ENCODE measurements at regions of chr7 and their contacts with region 1.

Region 1: DNA sequence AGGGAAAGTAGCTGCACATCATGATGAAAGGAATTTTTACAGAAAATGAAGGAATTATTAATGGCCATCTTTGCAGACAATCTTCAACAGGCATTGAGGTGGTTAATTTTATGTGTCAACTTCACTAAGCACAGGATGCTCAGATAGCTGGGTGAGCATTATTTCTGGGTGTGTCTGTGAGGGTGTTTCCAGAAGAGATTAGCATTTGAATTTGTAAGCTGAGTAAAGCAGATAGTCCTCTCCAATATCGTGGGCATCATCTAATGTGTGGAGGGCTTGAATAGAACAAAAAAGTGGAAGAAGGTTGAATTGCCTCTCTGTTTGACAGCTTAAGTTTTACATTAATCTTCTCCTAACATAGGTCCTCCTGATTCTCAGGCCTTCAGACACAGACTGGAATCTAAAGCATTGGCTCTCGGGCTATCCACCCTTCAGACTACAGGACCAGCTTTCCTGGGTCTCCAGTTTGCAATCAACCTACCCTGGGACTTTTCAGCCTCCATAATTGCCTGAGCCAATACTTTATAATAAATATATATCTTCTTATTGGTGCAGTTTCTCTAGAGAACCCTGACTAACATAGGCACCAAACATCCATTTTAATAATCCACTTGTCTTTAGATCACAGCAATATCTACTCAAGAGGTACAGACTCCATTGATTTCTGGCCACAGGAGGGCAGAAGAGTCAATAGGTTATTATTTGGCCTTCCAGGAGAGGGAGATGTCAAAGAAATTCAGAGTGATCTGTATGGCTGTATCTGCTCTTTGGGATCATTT is 10.5 kb upstream of the CRPPA start:
- DNase-seq: peak; percentile 50 to 65
- ATAC-seq: peak; percentile 99
- H3K4me3 ChIP-seq: no peak overlapping the region
- H3K27ac ChIP-seq: no peak overlapping the region
- H3K4me1 ChIP-seq: no peaks in the 10 kb centered on the region
- CTCF ChIP-seq: peak; percentile 72
- EP300 ChIP-seq: no peak
- POLR2A ChIP-seq: no peak
- RAD21 ChIP-seq: peak; percentile 74 to 77

Region 2: DNA sequence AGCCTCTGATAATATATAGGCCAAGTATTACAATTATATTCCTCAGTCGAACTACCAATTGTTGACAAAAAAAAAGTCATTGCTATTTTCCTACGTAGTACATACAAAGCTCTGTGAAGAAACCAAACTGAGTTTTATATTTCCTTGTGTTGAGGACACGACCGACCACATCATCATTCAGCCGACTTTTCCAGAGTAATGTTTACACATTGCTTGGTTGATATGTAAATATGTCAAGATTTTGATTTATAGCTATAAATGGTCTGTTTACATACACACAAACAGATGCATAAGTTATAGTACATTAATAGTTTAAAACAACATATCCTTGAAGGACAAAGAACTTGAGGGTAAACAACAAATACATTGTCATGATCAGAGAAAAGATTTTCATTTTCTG is 132.0 kb before region 1 on chr7:
- CTCF ChIA-PET with region 1: no interaction called
- POLR2A ChIA-PET with region 1: no interaction called
- DNase-seq: peak in 1 of 2 experiments; percentile 38
- ATAC-seq: peak in 1 of 2 experiments; percentile 32; a peak in 1 of 6 replicates
- H3K4me3 ChIP-seq: no peak overlapping the region
- H3K27ac ChIP-seq: no peak overlapping the region
- H3K4me1 ChIP-seq: 0 out of 3 replicates have a peak, but pooled peaks cover 4% of the 10 kb centered on the region
- CTCF ChIP-seq: no peak
- EP300 ChIP-seq: no peak
- POLR2A ChIP-seq: no peak
- RAD21 ChIP-seq: no peak

Region 3: GRCh38 chr7:16420649-16421332 is 11.0 kb before region 1 on chr7:
- CTCF ChIA-PET with region 1: interaction called, 21 read pairs
- POLR2A ChIA-PET with region 1: interaction called, 6 read pairs
- DNase-seq: peak; percentile 76 to 94
- ATAC-seq: peak; percentile 96 to 97
- H3K4me3 ChIP-seq: peak overlapping the region; percentile 73
- H3K27ac ChIP-seq: peak overlapping the region; percentile 98
- H3K4me1 ChIP-seq: peaks cover 12% of the 10 kb centered on the region
- CTCF ChIP-seq: 0 out of 3 replicates have a peak, but pooled peaks have one; percentile 10
- EP300 ChIP-seq: no peak
- POLR2A ChIP-seq: peak; percentile 90
- RAD21 ChIP-seq: 0 out of 5 replicates have a peak, but pooled peaks of 1 of the 2 experiments have one; percentile 15

Region 4: GRCh38 chr7:16450366-16450765 is 18.5 kb after region 1 on chr7:
- CTCF ChIA-PET with region 1: interaction called, 20 read pairs
- POLR2A ChIA-PET with region 1: no interaction called
- DNase-seq: no peak
- ATAC-seq: no peak; a peak in 1 of 6 replicates
- H3K4me3 ChIP-seq: no peak overlapping the region
- H3K27ac ChIP-seq: no peak overlapping the region
- H3K4me1 ChIP-seq: no peaks in the 10 kb centered on the region
- CTCF ChIP-seq: no peak
- EP300 ChIP-seq: no peak
- POLR2A ChIP-seq: no peak
- RAD21 ChIP-seq: no peak